ENCODE measurements at regions of chr1 and their contacts with region 1.

Region 1: GRCh38 chr1:72186733-72187307 is 95.5 kb downstream of the NEGR1 start:
- DNase-seq: peak; percentile 1
- ATAC-seq: peak; percentile 71
- H3K4me3 ChIP-seq: no peak overlapping the region
- H3K27ac ChIP-seq: no peak overlapping the region
- H3K4me1 ChIP-seq: no peaks in the 10 kb centered on the region
- H3K27me3 ChIP-seq: no peaks in the 10 kb centered on the region
- CTCF ChIP-seq: peak; percentile 54
- EP300 ChIP-seq: no peak
- POLR2A ChIP-seq: no peak
- RAD21 ChIP-seq: no peak

Region 2: GRCh38 chr1:72623299-72623708 is 436.5 kb after region 1 on chr1:
- CTCF ChIA-PET with region 1: no interaction called
- POLR2A ChIA-PET with region 1: no interaction called
- in situ Hi-C with region 1: no loop called
- intact Hi-C with region 1: loop called (anchors 1 kb)
- DNase-seq: peak; percentile 20
- ATAC-seq: peak; percentile 87
- H3K4me3 ChIP-seq: no peak overlapping the region
- H3K27ac ChIP-seq: no peak overlapping the region
- H3K4me1 ChIP-seq: no peaks in the 10 kb centered on the region
- H3K27me3 ChIP-seq: no peaks in the 10 kb centered on the region
- CTCF ChIP-seq: peak; percentile 64
- EP300 ChIP-seq: no peak
- POLR2A ChIP-seq: no peak
- RAD21 ChIP-seq: 0 out of 2 replicates have a peak, but pooled peaks have one; percentile 15

Region 3: DNA sequence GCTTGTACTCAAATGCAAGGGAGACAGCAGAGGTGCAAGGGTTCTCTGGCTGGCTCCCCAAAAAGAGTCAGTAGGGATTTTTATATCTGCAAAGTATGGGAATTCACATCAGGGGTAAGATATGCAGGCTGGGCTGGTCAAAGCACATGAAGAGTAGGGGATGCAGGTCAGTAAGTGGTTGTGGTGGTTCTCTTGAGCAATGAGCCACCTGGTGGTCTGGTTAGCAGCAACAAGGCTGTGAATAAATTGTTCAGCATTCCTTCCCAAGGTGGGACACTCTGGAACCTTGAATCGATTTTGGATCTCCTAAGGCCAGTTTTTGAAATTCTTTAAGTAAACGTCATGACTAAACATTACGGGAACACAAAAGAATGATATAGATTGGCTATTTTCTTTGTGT is 658.5 kb after region 1 on chr1:
- CTCF ChIA-PET with region 1: no interaction called
- POLR2A ChIA-PET with region 1: no interaction called
- in situ Hi-C with region 1: no loop called
- intact Hi-C with region 1: loop called (anchors 10 kb)
- DNase-seq: peak; percentile 0
- ATAC-seq: peak; percentile 56; the same call in 1 of the 3 replicates
- H3K4me3 ChIP-seq: no peak overlapping the region
- H3K27ac ChIP-seq: no peak overlapping the region
- H3K4me1 ChIP-seq: no peaks in the 10 kb centered on the region
- H3K27me3 ChIP-seq: no peaks in the 10 kb centered on the region
- CTCF ChIP-seq: peak; percentile 24; the same call in 1 of the 2 replicates
- EP300 ChIP-seq: no peak
- POLR2A ChIP-seq: no peak
- RAD21 ChIP-seq: no peak

Measured in HepG2 (cell line).